ENCODE measurements at regions of chr12 and their contacts with region 1.

Region 1: DNA sequence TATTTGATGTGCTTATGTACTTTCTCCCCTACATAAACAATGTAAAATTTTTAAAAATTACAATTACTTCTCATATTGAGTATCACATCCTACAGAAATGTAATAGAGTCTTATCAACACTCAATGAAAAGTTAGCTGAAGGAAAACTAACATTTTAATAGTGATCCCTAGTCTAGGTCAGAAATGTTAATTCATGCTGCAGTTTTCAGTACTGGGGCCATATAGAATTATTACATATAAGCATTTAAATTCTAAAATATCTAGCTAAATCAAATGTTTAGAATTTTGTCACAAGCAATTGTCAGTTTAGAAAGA is 37.8 kb downstream of the SLC6A15 start:
- DNase-seq: no peak

Region 2: GRCh38 chr12:84937415-84937814 is 62.6 kb after region 1 on chr12:
- in situ Hi-C with region 1: no loop called
- DNase-seq: no peak

Region 3: DNA sequence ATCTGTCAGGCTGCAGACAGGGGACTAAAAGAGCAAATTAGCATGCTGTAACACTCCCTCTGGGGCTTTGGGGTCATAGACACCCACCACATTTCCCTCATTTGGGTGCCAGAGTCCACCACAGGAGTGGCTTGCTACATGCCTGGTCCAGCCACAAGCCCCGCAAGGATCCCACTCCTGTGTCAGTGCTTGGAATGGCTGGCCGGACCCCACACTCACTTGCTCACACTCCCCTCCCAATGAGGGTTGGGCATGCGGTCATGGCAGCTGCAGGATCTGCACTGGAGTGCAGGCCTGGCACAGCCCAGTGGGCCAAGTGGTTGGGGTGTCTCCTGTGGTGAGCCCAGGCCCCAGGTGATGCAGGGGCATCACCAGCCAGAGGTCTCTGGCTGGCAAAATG is 101.4 kb after region 1 on chr12:
- in situ Hi-C with region 1: no loop called
- DNase-seq: no peak

Region 4: GRCh38 chr12:85036241-85036707 is 161.5 kb after region 1 on chr12 and contains the starts of genes LRRIQ1 and TSPAN19:
- in situ Hi-C with region 1: loop called (anchors 25 kb)
- DNase-seq: peak; percentile 98

Region 5: DNA sequence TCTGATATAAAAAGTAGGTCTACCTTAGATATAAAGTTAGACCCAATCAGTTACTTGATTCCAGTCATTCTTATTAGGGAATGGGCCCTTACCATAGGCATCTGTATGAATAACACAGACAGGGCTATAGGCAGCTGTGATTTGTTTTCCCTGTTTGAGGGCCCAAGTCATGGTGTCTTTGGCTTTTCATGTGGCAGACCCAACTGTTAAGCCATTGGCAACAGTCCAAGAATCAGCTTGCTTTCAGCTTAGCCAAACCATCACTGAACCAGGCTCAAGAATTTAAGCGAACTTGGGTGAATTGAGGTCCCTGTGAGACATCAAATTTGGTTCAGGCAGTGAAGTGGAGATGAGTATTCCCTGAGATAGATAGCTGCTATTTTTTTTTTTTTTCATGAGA is 272.5 kb after region 1 on chr12:
- in situ Hi-C with region 1: no loop called
- DNase-seq: no peak

Region 6: GRCh38 chr12:85253823-85254222 is 379.0 kb after region 1 on chr12:
- in situ Hi-C with region 1: no loop called
- DNase-seq: no peak

Measured in ACHN (cell line).